Gastrocnemius medialis (tissue), 4 donors: ENCODE measurements at regions of chr9 and their contacts with region 1.

Region 1: GRCh38 chr9:32378993-32379729 is 5.3 kb upstream of the ACO1 start:
- DNase-seq: no peak
- ATAC-seq: peak; percentile 84
- H3K4me3 ChIP-seq: no peak overlapping the region
- H3K27ac ChIP-seq: no peak overlapping the region
- H3K4me1 ChIP-seq: peaks cover 3 to 5% of the 10 kb centered on the region in 2 donors
- H3K27me3 ChIP-seq: no peaks in the 10 kb centered on the region
- CTCF ChIP-seq: peak; percentile 52 to 82 (median 72)
- POLR2A ChIP-seq: no peak

Region 2: DNA sequence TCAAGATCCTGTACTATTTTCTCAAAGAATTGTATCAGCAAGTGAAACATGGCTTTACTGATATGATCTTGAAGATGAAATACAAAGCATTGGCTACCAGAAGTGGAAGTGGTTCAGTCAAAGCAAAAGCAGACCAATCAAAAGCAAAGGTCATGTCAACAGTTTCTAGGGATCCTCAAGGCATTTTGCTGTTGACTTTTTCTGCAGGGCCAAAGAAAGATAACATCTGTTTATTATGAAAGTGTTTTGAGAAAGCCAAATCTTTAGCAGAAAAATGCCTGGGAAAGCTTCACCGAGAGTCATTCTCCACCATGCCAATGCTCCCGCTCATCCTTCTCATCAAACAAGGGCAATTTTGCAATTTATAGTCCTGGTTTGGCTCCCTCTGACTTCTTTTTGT is 85.1 kb before region 1 on chr9:
- in situ Hi-C with region 1: no loop called
- intact Hi-C with region 1: no loop called
- DNase-seq: no peak
- ATAC-seq: no peak
- H3K4me3 ChIP-seq: no peak overlapping the region
- H3K27ac ChIP-seq: no peak overlapping the region
- H3K4me1 ChIP-seq: no peaks in the 10 kb centered on the region
- H3K27me3 ChIP-seq: no peaks in the 10 kb centered on the region
- CTCF ChIP-seq: no peak
- POLR2A ChIP-seq: no peak

Region 3: DNA sequence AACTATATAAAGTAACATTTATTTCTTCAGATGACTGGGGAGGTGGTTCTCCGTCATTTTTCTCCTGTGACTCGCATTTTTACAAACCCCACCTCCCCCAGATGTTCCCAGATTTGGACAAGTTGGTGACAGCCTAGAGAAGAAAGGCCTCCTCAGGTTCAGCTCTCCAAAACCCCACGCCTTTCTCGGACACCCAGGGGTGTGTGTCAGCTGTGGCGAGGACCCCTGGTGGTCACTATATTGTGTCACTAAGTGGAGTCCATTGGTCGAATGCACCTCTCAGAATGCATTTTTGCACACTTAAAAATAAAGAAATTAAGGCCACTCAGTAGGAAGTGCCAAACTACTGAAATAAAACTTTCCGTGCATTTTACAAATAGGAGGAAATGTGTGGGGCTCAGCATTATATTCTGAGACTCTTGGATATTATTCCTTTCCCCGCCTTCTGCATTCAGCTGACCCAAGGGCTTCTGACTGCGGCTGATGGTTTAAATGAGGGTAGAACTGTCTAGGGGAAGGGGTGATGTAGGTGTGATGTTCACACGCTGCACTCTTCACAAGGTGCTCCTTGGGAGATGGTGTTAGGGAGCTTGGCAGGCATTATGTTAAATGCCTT is 52.9 kb after region 1 on chr9:
- in situ Hi-C with region 1: loop called in 2 of 4 experiments (anchors 5 kb)
- intact Hi-C with region 1: loop called (anchors 1 kb)
- DNase-seq: peak in 1 of 2 donors; percentile 23
- ATAC-seq: peak in 1 of 2 donors; percentile 26
- H3K4me3 ChIP-seq: no peak overlapping the region
- H3K27ac ChIP-seq: no peak overlapping the region
- H3K4me1 ChIP-seq: no peaks in the 10 kb centered on the region
- H3K27me3 ChIP-seq: no peaks in the 10 kb centered on the region
- CTCF ChIP-seq: peak; percentile 25 to 63 (median 40)
- POLR2A ChIP-seq: no peak

Region 4: DNA sequence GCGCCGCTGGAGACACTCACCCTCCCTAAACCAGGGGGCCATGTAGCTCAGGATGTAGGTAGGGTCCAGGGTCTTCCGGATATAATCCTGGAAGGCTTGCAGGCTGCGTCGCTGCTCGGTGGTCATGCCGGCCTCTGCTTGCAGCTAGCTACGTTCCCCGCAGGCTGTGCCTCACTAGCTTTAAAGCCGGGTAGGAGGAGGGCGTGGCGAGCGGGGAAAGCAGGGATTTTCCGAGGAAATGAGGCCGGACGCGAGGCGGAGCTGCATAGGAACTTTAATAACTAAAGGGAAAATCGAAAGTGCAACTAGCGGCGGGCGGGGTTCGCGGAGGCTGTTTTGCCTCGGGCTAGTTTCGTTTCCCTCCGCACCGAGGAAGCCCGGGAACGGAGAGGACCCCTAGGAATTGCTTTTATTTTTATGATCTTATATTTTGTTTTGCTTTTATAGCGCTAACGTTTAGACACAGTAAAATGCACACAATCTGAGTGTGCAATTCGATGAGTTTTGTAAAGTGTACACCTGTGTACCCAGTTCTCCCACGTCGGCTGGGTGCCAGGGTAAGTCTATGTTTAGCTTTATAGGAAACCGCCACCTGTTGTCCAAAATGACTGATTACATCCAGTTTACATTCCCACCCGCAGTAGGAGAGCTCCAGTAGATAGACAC is 147.0 kb after region 1 on chr9 and contains the start of gene RIGI:
- in situ Hi-C with region 1: no loop called
- intact Hi-C with region 1: loop called (anchors 2 kb)
- DNase-seq: peak; percentile 75 to 83
- ATAC-seq: peak; percentile 92 to 94
- H3K4me3 ChIP-seq: peak within 1 kb of the TSS; percentile 70 to 79 (median 74)
- H3K27ac ChIP-seq: peak within 1 kb of the TSS; percentile 79 to 84 (median 82)
- H3K4me1 ChIP-seq: peaks cover 31% of the 10 kb centered on the region in 2 donors
- H3K27me3 ChIP-seq: no peaks in the 10 kb centered on the region
- CTCF ChIP-seq: peak; percentile 17 to 58 (median 43)
- POLR2A ChIP-seq: peak; percentile 34 to 71
- total RNA-seq, gene RIGI: 1.6 to 3.3 (median 2.8) TPM

Region 5: GRCh38 chr9:32571969-32572899 is 193.1 kb after region 1 on chr9:
- in situ Hi-C with region 1: loop called (anchors 5 kb)
- intact Hi-C with region 1: loop called (anchors 2 kb)
- DNase-seq: peak; percentile 23 to 48
- ATAC-seq: peak; percentile 79 to 82
- H3K4me3 ChIP-seq: peak overlapping the region; percentile 75 to 96 (median 86)
- H3K27ac ChIP-seq: peak overlapping the region; percentile 86 to 95 (median 87)
- H3K4me1 ChIP-seq: peaks cover 13 to 16% of the 10 kb centered on the region in 2 donors
- H3K27me3 ChIP-seq: no peaks in the 10 kb centered on the region
- CTCF ChIP-seq: peak; percentile 33 to 60 (median 53)
- POLR2A ChIP-seq: no peak

Region 6: DNA sequence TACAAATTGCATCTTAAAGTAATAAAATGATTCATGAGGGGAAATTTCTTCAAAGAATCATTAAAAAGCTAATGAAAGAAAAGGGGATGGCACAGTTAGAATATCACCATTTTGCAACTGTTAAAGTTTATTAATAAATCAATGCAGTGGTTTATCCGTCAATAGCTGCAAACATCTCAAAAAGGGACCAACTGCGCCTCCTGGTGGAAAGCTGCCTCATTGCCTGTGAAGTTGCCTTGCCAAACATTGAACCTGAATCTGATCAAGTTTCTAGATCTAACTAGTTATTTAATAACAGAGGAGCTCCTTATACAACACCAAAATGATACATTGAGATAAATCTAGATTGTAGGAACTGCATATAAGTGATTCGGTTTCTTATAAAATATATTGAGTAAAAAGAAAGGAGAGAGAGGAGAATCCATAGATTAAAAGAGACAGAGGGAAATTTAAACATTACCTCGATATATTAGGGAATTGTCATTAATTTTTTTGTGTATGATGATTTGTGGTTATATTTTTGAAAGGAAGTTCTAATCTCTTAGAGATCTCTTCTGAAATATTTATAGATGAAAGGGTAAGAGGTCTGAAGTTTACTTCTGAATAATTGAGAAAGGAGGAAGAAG is 200.7 kb after region 1 on chr9:
- in situ Hi-C with region 1: loop called (anchors 5 kb)
- intact Hi-C with region 1: loop called (anchors 1 kb)
- DNase-seq: peak; percentile 18 to 31
- ATAC-seq: no peak
- H3K4me3 ChIP-seq: peak overlapping the region in 1 of 4 donors; percentile 4
- H3K27ac ChIP-seq: no peak overlapping the region
- H3K4me1 ChIP-seq: no peaks in the 10 kb centered on the region
- H3K27me3 ChIP-seq: no peaks in the 10 kb centered on the region
- CTCF ChIP-seq: peak; percentile 67 to 91 (median 80)
- POLR2A ChIP-seq: no peak

Region 7: GRCh38 chr9:32968101-32969011 is 589.2 kb after region 1 on chr9:
- in situ Hi-C with region 1: loop called in 3 of 4 experiments (anchors 10 kb)
- intact Hi-C with region 1: loop called (anchors 5 kb)
- DNase-seq: peak in 1 of 2 donors; percentile 23
- ATAC-seq: no peak
- H3K4me3 ChIP-seq: no peak overlapping the region
- H3K27ac ChIP-seq: no peak overlapping the region
- H3K4me1 ChIP-seq: peaks cover 0 to 5% of the 10 kb centered on the region in 2 donors
- H3K27me3 ChIP-seq: no peaks in the 10 kb centered on the region
- CTCF ChIP-seq: peak; percentile 62 to 85 (median 74)
- POLR2A ChIP-seq: no peak

Region 8: GRCh38 chr9:33167046-33167808 is 788.1 kb after region 1 on chr9 and contains the start of gene B4GALT1:
- in situ Hi-C with region 1: loop called in 1 of 4 experiments (anchors 25 kb)
- intact Hi-C with region 1: no loop called
- DNase-seq: peak; percentile 83 to 93
- ATAC-seq: peak; percentile 37 to 56
- H3K4me3 ChIP-seq: peak within 1 kb of the TSS; percentile 77 to 97 (median 90)
- H3K27ac ChIP-seq: peak within 1 kb of the TSS; percentile 96 to 99 (median 99)
- H3K4me1 ChIP-seq: peaks cover 44 to 46% of the 10 kb centered on the region in 2 donors
- H3K27me3 ChIP-seq: no peaks in the 10 kb centered on the region
- CTCF ChIP-seq: peak in 1 of 5 experiments; percentile 16
- POLR2A ChIP-seq: peak; percentile 93 to 94
- total RNA-seq, gene B4GALT1: 24.2 to 56.2 (median 42.7) TPM